ENCODE measurements at regions of chr13 and their contacts with region 1.

Region 1: GRCh38 chr13:25977671-25978070 is 74.1 kb downstream of the SHISA2 start:
- DNase-seq: no peak
- H3K4me3 Mint-ChIP-seq: no peak overlapping the region
- H3K27ac Mint-ChIP-seq: no peak overlapping the region
- H3K4me1 Mint-ChIP-seq: peaks cover 37% of the 10 kb centered on the region
- H3K27me3 Mint-ChIP-seq: no peaks in the 10 kb centered on the region

Region 2: GRCh38 chr13:25990809-25991208 is 13.1 kb after region 1 on chr13:
- intact Hi-C with region 1: loop called (anchors 2 kb)
- DNase-seq: no peak
- H3K4me3 Mint-ChIP-seq: no peak overlapping the region
- H3K27ac Mint-ChIP-seq: no peak overlapping the region
- H3K4me1 Mint-ChIP-seq: no peaks in the 10 kb centered on the region
- H3K27me3 Mint-ChIP-seq: peaks cover 4% of the 10 kb centered on the region

Region 3: GRCh38 chr13:26310470-26310869 is 332.8 kb after region 1 on chr13:
- intact Hi-C with region 1: no loop called
- DNase-seq: no peak
- H3K4me3 Mint-ChIP-seq: no peak overlapping the region
- H3K27ac Mint-ChIP-seq: peak overlapping the region; percentile 15
- H3K4me1 Mint-ChIP-seq: peaks cover 6% of the 10 kb centered on the region
- H3K27me3 Mint-ChIP-seq: no peaks in the 10 kb centered on the region

Measured in activated T-helper 1 cell treated with anti-CD3 and anti-CD28 coated beads, Interleukin-12 subunit alpha, Interleukin-12 subunit beta, Interleukin-2, Interleukin-4 antibody, amounts not matched to agents 30 ng/mL and 10 ng/mL and 1 ng/mL, durations not matched to agents 14 hours and 24 hours and 36 hours (primary cell).